Panc1 (cell line): ENCODE measurements at regions of chr15 and their contacts with region 1.

Region 1: GRCh38 chr15:71691458-71692417 is 118.6 kb upstream of the NR2E3 start:
- DNase-seq: peak; percentile 7
- ATAC-seq: peak; percentile 66; the same call in 1 of the 2 replicates
- H3K4me3 ChIP-seq: no peak overlapping the region
- H3K27ac ChIP-seq: no peak overlapping the region
- H3K4me1 ChIP-seq: no peaks in the 10 kb centered on the region
- H3K27me3 ChIP-seq: no peaks in the 10 kb centered on the region
- CTCF ChIP-seq: no peak

Region 2: DNA sequence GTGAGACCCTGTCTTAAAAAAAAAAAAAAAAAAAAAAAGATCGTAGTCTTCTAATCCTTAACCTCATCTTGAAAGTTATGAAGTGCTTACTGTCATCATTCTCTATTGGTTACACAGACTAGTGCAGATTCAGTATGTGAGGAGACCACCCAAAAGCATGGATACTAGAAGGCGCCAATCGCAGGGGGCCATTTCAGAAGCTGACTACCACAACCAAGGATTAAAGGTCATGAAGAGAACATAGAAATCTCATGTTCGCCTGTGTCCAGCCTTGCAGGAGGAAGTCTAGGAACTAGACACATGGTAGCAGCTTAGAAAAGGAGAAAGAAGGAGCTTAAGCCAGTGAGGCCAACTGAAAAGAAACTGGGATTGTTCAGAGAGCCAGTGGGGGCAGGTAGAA is 368.7 kb before region 1 on chr15:
- CTCF ChIA-PET with region 1: no interaction called
- POLR2A ChIA-PET with region 1: interaction called, 13 read pairs
- in situ Hi-C with region 1: no loop called
- intact Hi-C with region 1: no loop called
- DNase-seq: no peak
- ATAC-seq: no peak
- H3K4me3 ChIP-seq: no peak overlapping the region
- H3K27ac ChIP-seq: no peak overlapping the region
- H3K4me1 ChIP-seq: no peaks in the 10 kb centered on the region
- H3K27me3 ChIP-seq: no peaks in the 10 kb centered on the region
- CTCF ChIP-seq: no peak